ENCODE measurements at regions of chr1 and their contacts with region 1.

Region 1: GRCh38 chr1:155250633-155251449 is 4.4 kb downstream of the ENTREP3 start:
- DNase-seq: peak; percentile 92 to 97 (median 94)
- ATAC-seq: peak; percentile 94
- H3K4me3 ChIP-seq: no peak overlapping the region
- H3K27ac ChIP-seq: peak overlapping the region; percentile 60; the same call in 1 of the 3 replicates
- H3K4me1 ChIP-seq: peaks cover 25 to 51% of the 10 kb centered on the region in 2 experiments
- H3K27me3 ChIP-seq: no peaks in the 10 kb centered on the region
- CTCF ChIP-seq: peak; percentile 100
- EP300 ChIP-seq: peak; percentile 42; the same call in 1 of the 2 replicates
- POLR2A ChIP-seq: no peak
- RAD21 ChIP-seq: peak; percentile 93 to 97

Region 2: GRCh38 chr1:155026593-155026992 is 224.2 kb before region 1 on chr1:
- CTCF ChIA-PET with region 1: no interaction called
- POLR2A ChIA-PET with region 1: no interaction called
- in situ Hi-C with region 1: no loop called
- intact Hi-C with region 1: no loop called
- DNase-seq: peak in 2 of 4 experiments; percentile 42 to 43
- ATAC-seq: peak; percentile 68
- H3K4me3 ChIP-seq: no peak overlapping the region
- H3K27ac ChIP-seq: no peak overlapping the region
- H3K4me1 ChIP-seq: peaks cover 13 to 26% of the 10 kb centered on the region in 2 experiments; a peak in 3 of 5 replicates
- H3K27me3 ChIP-seq: no peaks in the 10 kb centered on the region
- CTCF ChIP-seq: no peak
- EP300 ChIP-seq: no peak
- POLR2A ChIP-seq: no peak
- RAD21 ChIP-seq: no peak

Region 3: DNA sequence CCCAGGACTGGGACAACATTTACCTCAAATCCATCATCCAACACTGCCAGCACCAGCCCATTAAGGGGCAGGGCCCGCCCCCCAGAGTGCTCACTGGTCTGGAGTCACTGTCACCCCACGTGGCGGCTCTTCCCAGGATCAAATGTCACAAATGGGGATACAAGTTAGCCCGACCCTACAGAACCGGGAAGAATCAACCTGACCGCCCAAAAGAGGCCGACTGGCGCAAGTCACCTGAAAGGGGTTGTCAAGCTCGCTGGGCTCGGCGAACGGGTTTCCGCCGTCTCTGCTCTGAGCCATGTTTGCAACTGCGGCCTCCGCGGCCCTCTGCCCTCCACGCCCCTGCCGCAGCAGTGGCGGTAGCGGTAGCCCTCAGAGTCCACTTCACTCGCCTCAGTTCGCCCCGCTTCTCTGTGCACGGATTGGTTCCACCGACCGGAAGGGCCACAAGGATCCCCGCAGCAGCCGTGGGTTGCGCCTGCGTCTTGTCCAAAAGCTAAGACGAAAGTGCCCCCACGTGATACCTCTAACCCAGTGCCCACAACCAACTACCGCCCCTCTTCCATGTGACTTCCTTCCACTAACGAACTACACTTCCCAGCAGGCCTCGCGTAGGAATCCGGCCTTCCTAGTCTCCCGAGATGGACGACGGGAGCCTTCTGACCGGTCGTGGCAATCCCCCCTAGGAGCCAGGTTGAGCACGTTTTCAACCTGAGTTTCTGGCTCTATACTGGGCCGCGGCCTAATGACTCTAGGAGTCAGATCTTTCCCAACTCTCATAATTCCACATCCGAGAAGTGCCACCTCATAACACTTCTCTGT is 11.2 kb after region 1 on chr1 and contains the start of gene SCAMP3:
- CTCF ChIA-PET with region 1: no interaction called
- POLR2A ChIA-PET with region 1: interaction called, 29 read pairs
- in situ Hi-C with region 1: no loop called
- intact Hi-C with region 1: no loop called
- DNase-seq: peak; percentile 90 to 98 (median 94)
- ATAC-seq: peak; percentile 97
- H3K4me3 ChIP-seq: peak within 1 kb of the TSS; percentile 65
- H3K27ac ChIP-seq: peak within 1 kb of the TSS; percentile 64
- H3K4me1 ChIP-seq: peaks cover 7 to 23% of the 10 kb centered on the region in 2 experiments; a peak in 4 of 5 replicates
- H3K27me3 ChIP-seq: no peaks in the 10 kb centered on the region
- CTCF ChIP-seq: no peak
- EP300 ChIP-seq: no peak
- POLR2A ChIP-seq: peak; percentile 93
- RAD21 ChIP-seq: peak in 1 of 2 experiments; percentile 30; a peak in 2 of 4 replicates
- polyA plus RNA-seq, gene SCAMP3: 72.9 to 83.3 TPM

Region 4: DNA sequence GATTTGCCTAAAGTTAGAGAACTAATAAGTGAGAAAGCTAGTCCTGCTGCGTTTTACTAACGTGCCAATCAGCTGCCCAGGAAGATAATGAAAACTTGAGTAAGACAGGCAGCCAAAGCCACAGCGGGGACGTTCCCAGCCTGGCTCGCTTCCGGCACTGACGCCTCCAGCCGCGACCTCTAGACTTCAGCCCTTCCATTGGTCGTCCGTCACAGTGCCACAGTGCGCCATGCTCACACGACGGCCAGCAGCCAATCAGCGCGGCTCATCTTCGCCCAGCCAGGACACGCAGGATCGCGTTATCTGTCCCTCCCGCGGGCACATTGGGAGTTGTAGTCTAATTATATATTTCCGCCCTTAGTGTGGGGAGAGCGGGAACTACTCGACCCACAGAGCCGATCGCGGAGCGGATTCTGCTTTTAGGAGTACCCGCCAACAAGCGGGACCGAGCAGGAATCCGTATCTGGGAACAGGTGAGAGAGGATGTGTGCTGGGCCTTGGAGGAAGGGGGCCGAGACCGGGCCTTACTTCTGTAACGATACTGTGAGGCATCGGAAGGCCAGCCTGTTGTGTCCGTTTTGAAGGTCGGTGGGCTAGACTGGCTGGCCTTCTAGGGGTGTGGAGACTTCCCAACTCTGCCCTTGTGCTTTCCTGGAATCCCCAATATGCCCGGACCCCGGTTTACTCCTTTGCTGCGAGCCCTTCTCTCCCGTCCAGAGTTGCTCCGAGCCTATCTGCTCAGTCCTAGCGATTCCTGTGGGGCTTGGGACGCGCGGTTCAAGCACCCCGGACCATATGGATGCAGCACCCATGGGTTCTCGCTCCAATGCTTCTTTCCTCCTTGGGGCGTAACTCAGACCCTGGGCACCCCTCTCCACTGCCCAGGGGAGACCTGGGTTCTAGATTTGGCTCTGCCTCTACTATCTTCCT is 57.9 kb after region 1 on chr1 and contains the start of gene FDPS:
- CTCF ChIA-PET with region 1: interaction called, 23 read pairs
- POLR2A ChIA-PET with region 1: interaction called, 3 read pairs
- in situ Hi-C with region 1: no loop called
- intact Hi-C with region 1: loop called (anchors 1 kb)
- DNase-seq: peak; percentile 97 to 100 (median 98)
- ATAC-seq: peak; percentile 97
- H3K4me3 ChIP-seq: peak within 1 kb of the TSS; percentile 75
- H3K27ac ChIP-seq: peak within 1 kb of the TSS; percentile 93
- H3K4me1 ChIP-seq: peaks cover 23 to 35% of the 10 kb centered on the region in 2 experiments; a peak in 4 of 5 replicates
- H3K27me3 ChIP-seq: no peaks in the 10 kb centered on the region
- CTCF ChIP-seq: 0 out of 6 replicates have a peak, but pooled peaks of 1 of the 3 experiments have one; percentile 1
- EP300 ChIP-seq: no peak
- POLR2A ChIP-seq: peak; percentile 89
- RAD21 ChIP-seq: no peak
- polyA plus RNA-seq, gene FDPS: 864 to 884 TPM

Region 5: GRCh38 chr1:155392898-155393411 is 142.1 kb after region 1 on chr1:
- CTCF ChIA-PET with region 1: no interaction called
- POLR2A ChIA-PET with region 1: no interaction called
- in situ Hi-C with region 1: no loop called
- intact Hi-C with region 1: no loop called
- DNase-seq: no peak
- ATAC-seq: no peak
- H3K4me3 ChIP-seq: no peak overlapping the region
- H3K27ac ChIP-seq: no peak overlapping the region
- H3K4me1 ChIP-seq: peaks cover 0 to 12% of the 10 kb centered on the region in 2 experiments; a peak in 2 of 5 replicates
- H3K27me3 ChIP-seq: no peaks in the 10 kb centered on the region
- CTCF ChIP-seq: no peak
- EP300 ChIP-seq: no peak
- POLR2A ChIP-seq: no peak
- RAD21 ChIP-seq: no peak

Region 6: DNA sequence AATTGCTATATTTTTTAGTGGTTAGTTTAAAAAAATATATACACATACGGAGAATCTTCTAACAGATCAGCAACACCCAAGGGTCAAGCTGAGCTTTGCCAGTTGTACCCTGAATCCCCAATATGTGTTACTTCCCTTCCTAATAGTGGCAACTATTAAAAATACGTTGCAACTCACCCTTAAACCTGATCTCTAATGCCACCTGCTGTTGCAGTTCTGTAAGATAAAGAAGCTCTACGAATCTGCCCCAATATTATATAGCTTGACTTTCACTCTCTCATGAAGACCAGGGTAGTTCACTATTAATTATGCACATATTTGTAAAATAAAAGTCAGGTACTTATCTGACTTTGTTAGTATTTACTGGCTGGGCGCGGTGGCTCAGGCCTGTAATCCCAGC is 253.4 kb after region 1 on chr1:
- CTCF ChIA-PET with region 1: interaction called, 6 read pairs
- POLR2A ChIA-PET with region 1: no interaction called
- in situ Hi-C with region 1: no loop called
- intact Hi-C with region 1: loop called (anchors 10 kb)
- DNase-seq: peak in 2 of 4 experiments; percentile 19 to 31
- ATAC-seq: peak; percentile 84
- H3K4me3 ChIP-seq: no peak overlapping the region
- H3K27ac ChIP-seq: no peak overlapping the region
- H3K4me1 ChIP-seq: no peaks in the 10 kb centered on the region; a peak in 1 of 5 replicates
- H3K27me3 ChIP-seq: no peaks in the 10 kb centered on the region
- CTCF ChIP-seq: peak in 2 of 3 experiments; percentile 32 to 56; a peak in 3 of 6 replicates
- EP300 ChIP-seq: no peak
- POLR2A ChIP-seq: no peak
- RAD21 ChIP-seq: peak in 1 of 2 experiments; percentile 52; a peak in 2 of 4 replicates

Region 7: GRCh38 chr1:155591770-155592169 is 340.9 kb after region 1 on chr1:
- CTCF ChIA-PET with region 1: interaction called, 22 read pairs
- POLR2A ChIA-PET with region 1: no interaction called
- in situ Hi-C with region 1: loop called (anchors 10 kb)
- intact Hi-C with region 1: loop called (anchors 5 kb)
- DNase-seq: peak; percentile 31 to 78 (median 40)
- ATAC-seq: peak; percentile 89
- H3K4me3 ChIP-seq: no peak overlapping the region
- H3K27ac ChIP-seq: no peak overlapping the region
- H3K4me1 ChIP-seq: no peaks in the 10 kb centered on the region; a peak in 1 of 5 replicates
- H3K27me3 ChIP-seq: no peaks in the 10 kb centered on the region
- CTCF ChIP-seq: peak; percentile 44 to 79 (median 62); a peak in 5 of 6 replicates
- EP300 ChIP-seq: no peak
- POLR2A ChIP-seq: no peak
- RAD21 ChIP-seq: peak; percentile 68 to 72

Measured in K562 (cell line).